Activated T-helper 1 cell treated with anti-CD3 and anti-CD28 coated beads, Interleukin-12 subunit alpha, Interleukin-12 subunit beta, Interleukin-2, Interleukin-4 antibody, amounts not matched to agents 30 ng/mL and 10 ng/mL and 1 ng/mL, durations not matched to agents 14 hours and 24 hours and 36 hours (primary cell): ENCODE measurements at regions of chr18 and their contacts with region 1.

Region 1: DNA sequence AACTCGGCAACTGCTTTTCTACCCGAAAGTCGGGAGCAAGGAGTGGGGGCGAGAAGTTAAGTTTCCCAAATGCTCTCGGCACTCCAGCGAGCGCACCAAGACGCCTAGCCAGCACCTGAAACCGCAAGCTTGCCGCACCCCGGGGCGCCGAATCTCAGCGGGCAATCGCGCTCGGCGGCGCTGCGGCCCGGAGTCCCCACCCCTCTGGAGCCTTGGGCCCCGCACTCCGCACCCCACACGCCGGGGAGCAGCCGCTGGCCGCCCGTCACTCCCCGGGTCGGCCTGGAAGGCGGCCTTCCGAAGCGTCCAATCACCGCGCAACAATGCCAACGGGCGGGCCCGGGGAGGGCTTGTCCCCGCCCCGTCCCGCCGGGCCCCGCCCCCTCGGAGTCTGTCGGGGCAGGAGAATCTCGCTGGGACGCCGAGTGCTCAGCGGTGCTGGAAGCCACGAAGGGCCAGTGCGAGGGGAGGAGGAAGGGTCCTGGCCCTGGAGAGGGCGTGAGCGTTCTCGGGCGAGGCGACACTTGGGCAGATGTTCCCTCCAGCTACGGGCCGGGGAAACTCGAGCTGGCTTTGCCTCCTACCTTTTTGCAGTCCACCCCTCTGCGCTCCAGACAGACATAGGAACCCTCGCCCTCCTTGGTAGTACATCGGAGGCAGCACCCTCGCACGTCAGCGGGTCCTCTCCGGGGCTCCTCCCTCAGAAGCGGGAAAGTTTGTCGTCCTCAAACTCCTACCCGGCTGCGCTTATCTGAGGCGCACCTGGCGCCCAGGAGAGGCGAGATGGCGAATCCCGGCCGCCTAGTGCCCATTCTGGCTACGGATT is 1.1 kb upstream of the ZBTB7C start:
- DNase-seq: peak; percentile 75
- H3K4me3 Mint-ChIP-seq: peak overlapping the region; percentile 63
- H3K27ac Mint-ChIP-seq: no peak overlapping the region
- H3K4me1 Mint-ChIP-seq: peaks cover 7% of the 10 kb centered on the region
- H3K27me3 Mint-ChIP-seq: peaks cover 71% of the 10 kb centered on the region

Region 2: DNA sequence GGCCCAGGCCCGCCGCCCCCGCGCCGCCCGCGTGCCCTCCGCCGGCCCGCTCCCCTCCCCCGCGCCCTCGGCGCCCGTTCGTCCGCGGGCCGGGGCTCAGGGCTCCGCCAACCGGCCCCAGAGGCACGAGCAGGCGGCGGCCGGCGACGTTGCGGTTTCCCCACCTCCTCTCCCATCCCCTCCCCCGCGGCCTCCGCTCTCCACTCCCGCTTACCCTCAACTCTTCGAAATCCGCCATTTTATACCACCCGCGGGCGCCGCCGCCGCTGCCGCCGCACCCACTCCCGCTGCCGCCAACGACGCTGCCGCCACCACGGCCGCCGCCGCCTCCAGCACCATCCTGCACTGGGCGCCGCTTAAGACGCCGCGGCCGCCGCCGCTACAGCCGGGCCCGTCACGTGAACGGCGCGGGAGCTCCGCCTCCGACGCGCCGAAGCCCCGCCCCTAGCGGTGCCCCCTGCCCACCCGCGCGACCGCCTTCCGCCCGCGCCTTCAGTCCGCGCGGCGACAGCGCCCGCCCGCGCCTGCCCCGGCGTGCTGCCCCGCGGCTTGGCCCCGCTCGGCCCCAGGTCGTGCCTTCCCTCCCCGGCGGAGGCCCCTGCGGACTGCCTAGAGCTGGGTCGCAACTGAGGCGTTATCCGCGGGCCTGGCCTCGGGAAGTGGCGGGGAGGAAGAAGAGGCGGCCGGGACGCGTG is 1493.1 kb before region 1 on chr18 and contains the starts of genes KATNAL2 and PIAS2:
- intact Hi-C with region 1: loop called (anchors 5 kb)
- DNase-seq: peak; percentile 68
- H3K4me3 Mint-ChIP-seq: peak within 1 kb of the TSS; percentile 94
- H3K27ac Mint-ChIP-seq: peak within 1 kb of the TSS; percentile 90
- H3K4me1 Mint-ChIP-seq: peaks cover 49% of the 10 kb centered on the region
- H3K27me3 Mint-ChIP-seq: peaks cover 5% of the 10 kb centered on the region
- total RNA-seq, gene KATNAL2: 0.26 and 0.27 TPM in 2 replicates
- total RNA-seq, gene PIAS2: 28.5 and 28.7 TPM in 2 replicates

Region 3: GRCh38 chr18:48129621-48130082 is 280.7 kb before region 1 on chr18:
- intact Hi-C with region 1: loop called (anchors 2 kb)
- DNase-seq: no peak
- H3K4me3 Mint-ChIP-seq: no peak overlapping the region
- H3K27ac Mint-ChIP-seq: no peak overlapping the region
- H3K4me1 Mint-ChIP-seq: peaks cover 35% of the 10 kb centered on the region
- H3K27me3 Mint-ChIP-seq: peaks cover 60% of the 10 kb centered on the region

Region 4: DNA sequence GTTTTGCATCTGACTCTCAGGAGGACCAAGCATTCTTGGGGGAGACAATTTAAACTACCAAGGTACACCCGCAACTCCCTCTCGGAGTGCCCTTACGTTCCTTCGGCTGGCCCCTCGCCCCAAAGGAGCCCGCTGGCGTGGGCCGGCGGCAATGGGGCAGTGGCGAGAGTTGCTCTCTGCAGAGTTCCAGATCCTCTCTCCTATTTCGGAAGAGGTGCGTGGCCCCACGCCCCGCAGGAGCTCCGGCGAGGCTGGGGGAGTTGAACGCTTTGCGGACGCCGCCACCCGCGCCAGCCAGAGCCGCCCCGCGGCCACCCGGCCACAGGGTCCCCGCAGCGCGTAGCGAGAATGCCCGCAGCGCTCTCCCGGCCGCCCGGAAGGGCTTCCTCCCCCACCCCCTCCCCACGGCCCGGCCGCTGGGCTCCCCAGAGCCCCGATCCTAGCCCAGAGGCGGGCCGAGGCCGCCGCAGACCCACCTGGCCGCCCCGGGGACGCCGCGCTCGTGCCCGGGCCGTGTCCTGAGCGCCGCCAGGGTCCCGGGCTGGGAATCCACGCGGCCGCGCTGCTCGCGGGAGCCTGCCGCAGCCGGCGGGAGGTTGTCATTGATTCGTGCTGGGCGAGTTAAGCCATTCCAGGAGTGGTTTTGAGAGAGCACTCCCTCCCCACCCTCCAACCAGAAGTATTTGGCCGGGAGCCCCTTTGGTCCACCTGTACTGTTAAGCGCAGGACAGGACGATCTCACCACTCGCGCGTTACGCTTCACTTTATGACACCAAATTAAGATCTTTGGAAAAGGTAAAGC is 273.6 kb before region 1 on chr18:
- intact Hi-C with region 1: loop called (anchors 5 kb)
- DNase-seq: no peak
- H3K4me3 Mint-ChIP-seq: peak overlapping the region; percentile 72
- H3K27ac Mint-ChIP-seq: peak overlapping the region; percentile 71
- H3K4me1 Mint-ChIP-seq: peaks cover 35% of the 10 kb centered on the region
- H3K27me3 Mint-ChIP-seq: peaks cover 62% of the 10 kb centered on the region

Region 5: GRCh38 chr18:48161191-48161910 is 249.0 kb before region 1 on chr18:
- intact Hi-C with region 1: loop called (anchors 1 kb)
- DNase-seq: peak; percentile 50
- H3K4me3 Mint-ChIP-seq: peak overlapping the region; percentile 60
- H3K27ac Mint-ChIP-seq: no peak overlapping the region
- H3K4me1 Mint-ChIP-seq: no peaks in the 10 kb centered on the region
- H3K27me3 Mint-ChIP-seq: peaks cover 27% of the 10 kb centered on the region

Region 6: DNA sequence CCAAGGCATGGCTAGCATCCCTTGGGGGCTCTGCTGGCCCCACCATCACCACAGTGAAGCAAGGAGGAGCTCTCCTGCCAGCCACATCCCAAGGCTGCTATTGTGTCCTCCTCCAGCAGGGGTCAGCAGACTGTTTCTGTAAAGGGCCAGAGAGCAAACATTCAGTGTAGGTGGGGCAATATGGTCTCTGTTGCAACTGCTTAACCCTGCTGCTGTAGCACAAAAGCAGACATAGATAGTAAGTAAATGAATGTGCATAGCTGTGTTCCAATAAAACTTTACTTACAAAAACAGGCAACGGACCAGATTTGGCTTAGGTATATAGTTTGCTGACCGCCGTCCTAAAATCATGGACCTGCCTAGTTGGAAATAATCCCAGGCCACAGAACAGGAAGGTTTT is 35.2 kb after region 1 on chr18:
- intact Hi-C with region 1: loop called (anchors 2 kb)
- DNase-seq: peak; percentile 57
- H3K4me3 Mint-ChIP-seq: no peak overlapping the region
- H3K27ac Mint-ChIP-seq: no peak overlapping the region
- H3K4me1 Mint-ChIP-seq: no peaks in the 10 kb centered on the region
- H3K27me3 Mint-ChIP-seq: peaks cover 34% of the 10 kb centered on the region

Region 7: DNA sequence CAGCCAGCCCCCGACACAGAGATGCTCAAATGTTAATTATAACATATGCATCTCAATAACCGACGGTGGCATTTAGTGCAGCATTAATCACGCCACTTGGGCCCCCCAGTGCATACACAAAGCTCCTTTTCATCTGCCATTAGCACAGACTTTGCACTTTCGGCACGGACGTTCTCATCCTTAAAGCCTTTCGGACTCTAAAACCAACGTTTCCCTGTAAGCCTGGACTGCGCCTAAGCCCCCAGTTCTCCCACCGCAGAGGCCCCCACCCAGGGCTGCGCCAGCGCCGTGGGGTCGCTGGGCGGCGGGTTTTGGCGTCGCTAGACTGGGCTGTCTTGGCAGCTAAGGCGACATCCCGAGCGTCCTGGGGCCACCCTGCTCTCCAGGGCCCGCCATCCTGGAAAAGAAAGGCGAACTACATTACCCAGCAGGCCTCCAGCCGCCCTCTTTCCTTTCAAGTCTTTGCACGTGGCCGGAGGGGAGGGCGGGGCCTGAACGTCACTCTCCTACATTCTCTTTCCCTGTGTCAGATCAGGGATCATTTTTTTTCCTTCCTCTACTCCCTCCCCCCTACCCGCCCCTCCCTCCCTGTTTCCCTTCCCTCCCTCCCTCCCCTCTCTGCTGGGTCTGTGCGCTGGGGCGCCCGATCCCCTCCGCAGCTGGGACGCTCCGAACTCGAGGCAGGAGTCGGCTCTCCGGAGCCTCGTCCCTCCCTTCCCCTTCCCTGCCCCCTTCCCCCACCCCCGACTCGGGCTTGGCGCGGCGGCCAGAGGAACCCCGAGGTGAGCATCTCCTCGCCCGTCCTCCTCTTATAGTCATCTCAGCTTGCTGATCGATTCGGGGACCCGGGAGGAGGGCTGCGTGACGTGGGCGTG is 128.5 kb after region 1 on chr18 and contains the start of gene CTIF:
- intact Hi-C with region 1: loop called (anchors 1 kb)
- DNase-seq: peak; percentile 60
- H3K4me3 Mint-ChIP-seq: peak within 1 kb of the TSS; percentile 90
- H3K27ac Mint-ChIP-seq: peak within 1 kb of the TSS; percentile 58
- H3K4me1 Mint-ChIP-seq: peaks cover 14% of the 10 kb centered on the region
- H3K27me3 Mint-ChIP-seq: peaks cover 30% of the 10 kb centered on the region
- total RNA-seq, gene CTIF: 7.2 and 8.5 TPM in 2 replicates

Region 8: GRCh38 chr18:48711651-48712486 is 301.6 kb after region 1 on chr18:
- intact Hi-C with region 1: no loop called
- DNase-seq: no peak
- H3K4me3 Mint-ChIP-seq: no peak overlapping the region
- H3K27ac Mint-ChIP-seq: no peak overlapping the region
- H3K4me1 Mint-ChIP-seq: peaks cover under 1% of the 10 kb centered on the region
- H3K27me3 Mint-ChIP-seq: peaks cover 11% of the 10 kb centered on the region